Activated CD4-positive, alpha-beta T cell treated with anti-CD3 and anti-CD28 coated beads for 36 hours (primary cell): ENCODE measurements at regions of chr14 and their contacts with region 1.

Region 1: DNA sequence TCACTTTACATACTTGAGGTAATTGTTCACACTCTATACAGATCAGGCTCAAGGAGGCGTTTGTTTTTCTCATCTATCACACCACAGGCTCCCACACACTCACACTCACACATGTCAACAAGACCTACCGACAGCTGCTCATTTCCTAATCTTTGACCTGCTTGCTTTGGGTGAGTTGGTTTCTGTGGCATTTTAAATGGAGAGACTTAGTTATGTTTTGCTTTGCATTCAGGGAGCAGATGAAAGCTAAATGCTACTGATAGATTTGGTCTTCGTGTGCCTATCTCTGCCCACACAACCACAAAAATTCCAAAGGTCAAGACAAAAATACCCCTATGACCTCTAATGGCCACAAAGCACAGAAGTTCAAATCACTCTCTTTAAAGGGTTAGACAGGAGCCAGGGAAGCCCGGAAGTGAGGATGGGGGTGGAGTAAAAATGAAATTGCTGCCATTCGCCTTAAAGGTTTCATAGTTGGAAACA is 203.5 kb upstream of the G2E3 start:
- DNase-seq: peak; percentile 55
- ATAC-seq: peak; percentile 88
- H3K4me3 Mint-ChIP-seq: peak overlapping the region; percentile 3
- H3K27ac Mint-ChIP-seq: peak overlapping the region; percentile 67
- H3K4me1 Mint-ChIP-seq: peaks cover 26% of the 10 kb centered on the region
- H3K27me3 Mint-ChIP-seq: peaks cover 6% of the 10 kb centered on the region

Region 2: DNA sequence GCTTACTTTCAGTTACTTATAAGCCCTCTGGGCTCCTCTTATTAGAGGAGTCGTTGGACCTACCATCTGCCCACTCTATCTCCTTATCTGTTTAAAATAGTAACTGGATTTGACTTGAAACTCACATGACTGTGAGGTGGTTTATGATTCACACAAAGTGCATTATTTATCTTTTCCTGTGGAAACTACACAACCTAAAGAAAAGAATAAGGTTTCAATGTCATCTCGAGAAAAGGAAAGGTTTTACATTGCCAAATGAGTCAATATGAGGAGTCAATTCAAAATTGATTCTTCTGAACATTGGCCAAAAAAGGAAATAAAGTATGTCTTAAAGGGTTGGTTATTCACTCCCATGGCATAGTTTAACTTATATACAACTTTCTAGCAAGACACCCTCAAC is 21.5 kb before region 1 on chr14:
- CTCF ChIA-PET with region 1: interaction called, 3 read pairs
- POLR2A ChIA-PET with region 1: no interaction called
- intact Hi-C with region 1: loop called (anchors 1 kb)
- DNase-seq: no peak
- ATAC-seq: peak; percentile 83
- H3K4me3 Mint-ChIP-seq: no peak overlapping the region
- H3K27ac Mint-ChIP-seq: peak overlapping the region; percentile 66
- H3K4me1 Mint-ChIP-seq: peaks cover 20% of the 10 kb centered on the region
- H3K27me3 Mint-ChIP-seq: peaks cover 9% of the 10 kb centered on the region